ENCODE measurements at regions of chr1 and their contacts with region 1.

Region 1: DNA sequence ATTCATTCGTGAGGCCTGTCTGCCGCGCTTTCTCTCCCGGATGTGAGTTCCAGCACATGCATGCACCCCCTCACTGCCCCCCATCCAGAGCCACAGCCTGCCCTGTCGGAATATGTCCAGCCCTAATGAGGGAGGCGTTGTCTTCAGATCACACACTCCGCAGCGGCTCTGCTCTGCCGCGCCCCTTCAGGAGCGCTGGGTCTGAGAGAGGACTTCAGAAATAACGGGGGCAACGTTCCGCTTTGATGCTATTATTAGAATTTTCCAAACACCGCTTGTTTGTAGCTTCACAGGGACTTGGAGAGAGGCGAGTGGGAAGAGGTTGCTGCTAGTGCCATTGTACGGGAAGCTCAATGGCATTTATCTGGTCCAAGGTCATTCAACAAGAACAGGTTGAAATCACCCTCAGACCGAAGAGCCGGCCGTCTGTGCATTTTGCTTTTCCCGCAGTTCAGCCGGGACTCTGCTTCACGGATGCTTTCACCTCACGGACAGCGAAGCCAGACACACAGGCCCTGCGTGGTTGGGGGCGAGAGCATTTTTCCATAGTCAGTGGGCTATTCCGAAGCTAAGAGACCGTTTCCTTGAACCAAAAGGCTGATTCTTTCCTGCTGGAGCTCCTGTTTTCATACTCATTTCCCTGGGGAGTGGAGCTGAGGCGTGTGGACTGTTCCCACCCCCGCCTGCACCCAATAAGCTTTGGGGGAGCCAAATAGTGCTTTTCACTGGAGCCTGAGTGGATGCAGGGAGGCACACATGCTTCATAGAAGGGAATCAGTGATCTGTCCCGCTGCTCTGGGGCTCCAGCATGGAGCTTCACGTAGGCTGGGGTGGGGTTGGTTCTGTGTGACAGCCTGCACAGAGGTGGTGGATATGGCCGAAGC is 69.7 kb downstream of the GALNT2 start:
- DNase-seq: no peak
- H3K4me3 ChIP-seq: peak overlapping the region; percentile 23 to 40
- H3K27ac ChIP-seq: peak overlapping the region; percentile 14 to 35
- H3K4me1 ChIP-seq: peaks cover 3 to 31% of the 10 kb centered on the region in 2 donors
- H3K27me3 ChIP-seq: no peaks in the 10 kb centered on the region
- CTCF ChIP-seq: no peak

Region 2: GRCh38 chr1:230160957-230161771 is 24.5 kb after region 1 on chr1:
- intact Hi-C with region 1: loop called (anchors 2 kb)
- DNase-seq: peak in 1 of 2 donors; percentile 50
- H3K4me3 ChIP-seq: no peak overlapping the region
- H3K27ac ChIP-seq: no peak overlapping the region
- H3K4me1 ChIP-seq: peaks cover 0 to 23% of the 10 kb centered on the region in 2 donors
- H3K27me3 ChIP-seq: no peaks in the 10 kb centered on the region
- CTCF ChIP-seq: no peak

Region 3: DNA sequence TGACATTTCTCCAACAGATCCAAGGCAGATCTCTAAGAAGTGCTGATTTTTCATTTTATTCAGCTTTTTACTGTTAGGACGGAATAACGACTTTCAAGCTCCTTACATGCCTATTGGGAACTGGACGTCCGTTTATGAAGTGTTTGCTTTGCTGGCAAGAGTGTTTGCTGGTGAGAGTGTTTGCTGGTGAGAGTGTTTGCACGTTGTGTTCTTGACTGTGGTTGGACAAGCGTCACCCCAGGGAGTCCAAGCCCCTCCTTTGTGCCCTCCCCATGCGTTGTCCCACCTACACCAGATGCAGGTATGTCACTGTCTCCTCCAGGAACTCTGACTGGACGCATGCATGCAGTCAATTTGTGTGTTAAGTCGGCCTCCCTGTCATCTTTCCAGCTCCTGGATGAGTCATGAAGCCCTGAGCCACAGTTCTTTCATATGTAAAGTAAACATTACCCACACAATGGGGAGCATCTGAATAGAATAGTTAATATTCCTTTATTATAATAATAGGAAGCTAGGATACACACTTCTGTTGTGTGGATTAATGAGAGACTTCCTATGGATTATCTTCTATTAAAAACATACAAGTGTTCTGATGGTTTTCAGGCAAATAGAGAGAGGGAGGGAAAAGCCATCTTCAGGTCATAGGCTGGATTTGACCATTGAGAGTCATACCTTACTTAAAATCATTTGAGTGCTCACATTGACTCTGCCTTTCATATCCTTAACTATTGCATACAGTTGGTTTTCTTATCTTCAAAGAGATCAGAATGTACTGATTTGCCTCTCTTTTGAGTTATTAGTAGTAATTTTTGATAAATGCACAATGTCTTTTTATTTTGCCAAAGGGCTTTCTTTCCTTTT is 49.5 kb after region 1 on chr1:
- intact Hi-C with region 1: loop called (anchors 1 kb)
- DNase-seq: no peak
- H3K4me3 ChIP-seq: peak overlapping the region in 1 of 2 donors; percentile 18
- H3K27ac ChIP-seq: peak overlapping the region in 1 of 2 donors; percentile 56
- H3K4me1 ChIP-seq: peaks cover 4 to 34% of the 10 kb centered on the region in 2 donors
- H3K27me3 ChIP-seq: no peaks in the 10 kb centered on the region
- CTCF ChIP-seq: no peak

Measured in ascending aorta (tissue), 2 donors.